ENCODE measurements at regions of chr21 and their contacts with region 1.

Region 1: DNA sequence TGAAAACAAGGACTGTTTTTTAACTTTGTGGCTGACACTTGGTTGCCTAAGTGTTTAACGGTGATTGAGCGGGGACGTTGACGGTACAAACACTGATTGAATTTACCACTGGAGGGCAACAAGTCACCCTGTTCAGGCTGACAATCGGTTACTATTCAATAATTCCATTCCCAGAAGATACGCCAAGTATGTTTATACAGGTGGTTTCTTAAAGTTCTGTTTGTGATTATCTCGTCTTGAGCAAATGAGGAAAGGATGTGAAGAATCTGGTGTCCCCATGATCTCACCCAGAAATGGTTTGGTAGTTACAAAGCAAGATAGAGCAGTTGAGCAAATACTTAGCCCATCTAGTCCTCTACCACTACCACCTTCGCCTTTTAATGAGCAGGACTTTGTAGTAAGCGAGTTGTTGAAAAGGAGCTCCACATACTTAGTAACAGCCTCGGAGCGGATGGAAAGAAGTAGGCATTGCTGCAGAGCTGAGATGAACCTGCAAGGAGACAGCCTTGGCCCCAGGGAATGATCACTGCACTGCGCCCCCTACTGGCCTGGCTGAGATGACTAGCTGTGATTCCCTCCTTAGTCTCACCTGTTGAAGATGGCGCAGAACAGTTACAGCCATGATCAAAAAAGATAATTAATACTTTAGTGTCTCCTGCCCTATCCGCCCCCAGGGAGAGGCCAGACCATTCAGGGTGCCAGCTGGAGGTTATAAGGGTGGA is 36.3 kb downstream of the IFNAR1 start:
- DNase-seq: peak; percentile 82 to 87 (median 83)
- H3K4me3 ChIP-seq: peak overlapping the region; percentile 47 to 58
- H3K4me3 Mint-ChIP-seq: peak overlapping the region; percentile 83 to 97 (median 91)
- H3K27ac ChIP-seq: peak overlapping the region; percentile 47
- H3K27ac Mint-ChIP-seq: peak overlapping the region; percentile 87 to 99 (median 94)
- H3K4me1 ChIP-seq: peaks cover 21% of the 10 kb centered on the region
- H3K4me1 Mint-ChIP-seq: peaks cover 13 to 22% (median 18%) of the 10 kb centered on the region in 4 donors
- H3K27me3 ChIP-seq: no peaks in the 10 kb centered on the region
- H3K27me3 Mint-ChIP-seq: peaks cover 0 to under 1% of the 10 kb centered on the region in 2 donors

Region 2: DNA sequence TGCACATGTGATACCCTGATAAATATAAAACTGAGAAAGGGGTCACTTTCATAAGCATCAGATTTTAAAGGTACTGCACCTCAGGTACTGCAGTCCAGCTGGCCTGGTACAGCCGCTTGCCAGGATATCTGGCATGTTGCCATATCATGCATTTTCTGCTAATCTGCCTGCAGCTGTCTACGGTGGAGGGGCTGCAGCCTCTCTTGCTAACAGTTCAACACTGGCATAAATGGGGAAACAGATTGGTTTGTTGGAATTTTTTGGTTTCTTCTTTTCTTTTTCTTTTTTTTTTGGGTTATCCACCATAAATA is 1153.7 kb before region 1 on chr21:
- CTCF ChIA-PET with region 1: no interaction called
- POLR2A ChIA-PET with region 1: no interaction called
- intact Hi-C with region 1: no loop called
- DNase-seq: no peak
- H3K4me3 ChIP-seq: no peak overlapping the region
- H3K4me3 Mint-ChIP-seq: no peak overlapping the region
- H3K27ac ChIP-seq: no peak overlapping the region
- H3K27ac Mint-ChIP-seq: no peak overlapping the region
- H3K4me1 ChIP-seq: no peaks in the 10 kb centered on the region
- H3K4me1 Mint-ChIP-seq: no peaks in the 10 kb centered on the region
- H3K27me3 ChIP-seq: no peaks in the 10 kb centered on the region
- H3K27me3 Mint-ChIP-seq: peaks cover 4 to 9% of the 10 kb centered on the region in 2 donors

Region 3: GRCh38 chr21:32747396-32747795 is 613.6 kb before region 1 on chr21:
- CTCF ChIA-PET with region 1: no interaction called
- POLR2A ChIA-PET with region 1: no interaction called
- intact Hi-C with region 1: no loop called
- DNase-seq: no peak
- H3K4me3 ChIP-seq: no peak overlapping the region
- H3K4me3 Mint-ChIP-seq: no peak overlapping the region
- H3K27ac ChIP-seq: no peak overlapping the region
- H3K27ac Mint-ChIP-seq: peak overlapping the region in 3 of 7 donors; percentile 42 to 71 (median 45)
- H3K4me1 ChIP-seq: no peaks in the 10 kb centered on the region
- H3K4me1 Mint-ChIP-seq: peaks cover 0 to 19% (median 11%) of the 10 kb centered on the region in 4 donors
- H3K27me3 ChIP-seq: no peaks in the 10 kb centered on the region
- H3K27me3 Mint-ChIP-seq: no peaks in the 10 kb centered on the region

Region 4: DNA sequence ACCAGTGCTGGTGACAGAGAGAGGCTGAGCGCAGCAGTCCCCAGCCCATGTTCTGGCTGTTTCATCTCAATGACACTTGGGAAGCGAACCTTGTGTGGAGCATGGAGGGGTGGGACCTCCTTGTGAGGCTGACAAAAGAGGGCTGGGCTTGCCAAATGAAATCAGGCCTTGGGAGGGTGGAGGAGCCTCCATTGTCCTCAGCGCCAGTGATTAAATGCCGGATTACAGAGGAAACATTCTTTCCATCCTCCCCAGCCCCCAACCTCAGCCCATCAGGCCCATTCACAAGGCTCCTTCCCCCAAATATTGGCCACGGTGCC is 526.2 kb before region 1 on chr21:
- CTCF ChIA-PET with region 1: interaction called, 11 read pairs
- POLR2A ChIA-PET with region 1: no interaction called
- intact Hi-C with region 1: no loop called
- DNase-seq: no peak
- H3K4me3 ChIP-seq: no peak overlapping the region
- H3K4me3 Mint-ChIP-seq: no peak overlapping the region
- H3K27ac ChIP-seq: no peak overlapping the region
- H3K27ac Mint-ChIP-seq: no peak overlapping the region
- H3K4me1 ChIP-seq: no peaks in the 10 kb centered on the region
- H3K4me1 Mint-ChIP-seq: no peaks in the 10 kb centered on the region
- H3K27me3 ChIP-seq: no peaks in the 10 kb centered on the region
- H3K27me3 Mint-ChIP-seq: peaks cover 2 to 3% of the 10 kb centered on the region in 2 donors

Region 5: DNA sequence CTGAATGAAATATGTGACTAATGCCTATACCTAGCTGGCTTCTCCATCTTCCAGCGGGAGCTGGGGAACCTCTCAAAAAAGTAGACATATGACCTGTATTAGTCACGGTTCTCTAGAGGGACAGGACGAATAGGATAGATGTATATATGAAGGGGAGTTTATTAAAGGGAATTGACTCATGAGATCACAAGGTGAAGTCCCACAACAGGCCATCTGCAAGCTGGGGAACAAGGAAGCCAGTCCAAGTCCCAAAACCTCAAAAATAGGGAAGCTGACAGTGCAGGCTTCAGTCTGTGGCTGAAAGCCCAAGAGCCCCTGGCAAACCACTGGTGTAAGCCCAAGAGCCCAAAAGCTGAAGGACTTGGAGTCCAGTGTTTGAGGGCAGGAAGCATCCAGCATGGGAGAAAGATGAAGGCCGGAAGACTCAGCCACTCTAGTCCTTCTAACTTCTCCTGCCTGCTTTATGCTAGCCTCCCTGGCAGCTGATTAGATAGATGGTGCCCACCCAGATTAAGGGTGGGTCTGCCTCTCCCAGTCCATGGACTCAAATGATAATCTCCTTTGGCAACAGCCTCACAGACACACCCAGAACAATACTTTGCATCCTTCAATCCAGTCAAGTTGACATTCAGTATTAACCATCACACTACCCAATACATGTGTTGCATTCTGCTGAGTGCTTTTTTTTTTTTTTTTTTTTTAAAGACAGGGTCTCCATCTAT is 271.5 kb before region 1 on chr21:
- CTCF ChIA-PET with region 1: no interaction called
- POLR2A ChIA-PET with region 1: no interaction called
- intact Hi-C with region 1: no loop called
- DNase-seq: no peak
- H3K4me3 ChIP-seq: no peak overlapping the region
- H3K4me3 Mint-ChIP-seq: no peak overlapping the region
- H3K27ac ChIP-seq: no peak overlapping the region
- H3K27ac Mint-ChIP-seq: no peak overlapping the region
- H3K4me1 ChIP-seq: no peaks in the 10 kb centered on the region
- H3K4me1 Mint-ChIP-seq: no peaks in the 10 kb centered on the region
- H3K27me3 ChIP-seq: no peaks in the 10 kb centered on the region
- H3K27me3 Mint-ChIP-seq: peaks cover 3 to 10% of the 10 kb centered on the region in 2 donors

Region 6: GRCh38 chr21:33229784-33230544 is 131.1 kb before region 1 on chr21 and contains the start of gene IFNAR2:
- CTCF ChIA-PET with region 1: interaction called, 9 read pairs
- POLR2A ChIA-PET with region 1: interaction called, 17 read pairs
- intact Hi-C with region 1: no loop called
- DNase-seq: peak; percentile 63 to 73 (median 66)
- H3K4me3 ChIP-seq: peak within 1 kb of the TSS; percentile 70 to 87
- H3K4me3 Mint-ChIP-seq: peak within 1 kb of the TSS; percentile 89 to 97 (median 94)
- H3K27ac ChIP-seq: peak within 1 kb of the TSS; percentile 86
- H3K27ac Mint-ChIP-seq: peak within 1 kb of the TSS; percentile 90 to 96 (median 94)
- H3K4me1 ChIP-seq: peaks cover 41% of the 10 kb centered on the region
- H3K4me1 Mint-ChIP-seq: peaks cover 32 to 49% (median 39%) of the 10 kb centered on the region in 4 donors
- H3K27me3 ChIP-seq: no peaks in the 10 kb centered on the region
- H3K27me3 Mint-ChIP-seq: no peaks in the 10 kb centered on the region
- total RNA-seq, gene IFNAR2: 76.5 to 77.7 TPM

Region 7: DNA sequence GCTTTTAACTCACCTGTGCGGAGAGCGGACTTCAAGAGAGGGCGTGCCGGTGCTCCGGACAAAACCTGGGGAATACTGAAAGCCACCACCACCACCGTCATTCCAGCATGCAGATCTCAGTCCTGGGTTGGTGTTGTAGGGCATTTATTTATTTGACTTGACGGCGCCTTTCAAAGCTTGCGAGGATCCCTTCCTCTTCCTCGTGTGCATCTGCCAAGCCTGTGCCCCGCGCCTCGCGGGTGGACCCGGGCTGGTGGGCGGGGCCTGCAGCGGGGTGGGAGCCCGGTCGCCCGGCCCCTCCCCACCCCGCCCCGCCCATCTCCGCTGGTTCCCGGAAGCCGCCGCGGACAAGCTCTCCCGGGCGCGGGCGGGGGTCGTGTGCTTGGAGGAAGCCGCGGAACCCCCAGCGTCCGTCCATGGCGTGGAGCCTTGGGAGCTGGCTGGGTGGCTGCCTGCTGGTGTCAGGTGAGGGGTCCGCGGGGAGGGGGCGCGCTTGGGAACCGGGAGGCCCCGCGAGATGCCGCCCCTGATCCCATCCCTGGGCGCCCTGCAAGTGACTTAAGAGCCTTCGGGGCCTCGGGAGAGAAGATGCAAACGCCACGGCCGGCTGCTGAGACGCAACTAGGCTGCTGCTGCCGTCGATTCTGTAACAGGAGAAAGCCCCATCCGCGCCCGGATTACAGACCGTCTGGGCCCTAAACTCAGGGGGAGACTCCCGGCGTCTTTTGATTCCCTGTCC is 94.8 kb before region 1 on chr21 and contains the start of gene IL10RB:
- CTCF ChIA-PET with region 1: interaction called, 20 read pairs
- POLR2A ChIA-PET with region 1: interaction called, 34 read pairs
- intact Hi-C with region 1: loop called (anchors 5 kb)
- DNase-seq: peak; percentile 61 to 77 (median 68)
- H3K4me3 ChIP-seq: peak within 1 kb of the TSS; percentile 54 to 79
- H3K4me3 Mint-ChIP-seq: peak within 1 kb of the TSS; percentile 93 to 99 (median 96)
- H3K27ac ChIP-seq: peak within 1 kb of the TSS; percentile 80
- H3K27ac Mint-ChIP-seq: peak within 1 kb of the TSS; percentile 92 to 97 (median 95)
- H3K4me1 ChIP-seq: peaks cover 59% of the 10 kb centered on the region
- H3K4me1 Mint-ChIP-seq: peaks cover 38 to 74% (median 50%) of the 10 kb centered on the region in 4 donors
- H3K27me3 ChIP-seq: no peaks in the 10 kb centered on the region
- H3K27me3 Mint-ChIP-seq: no peaks in the 10 kb centered on the region
- total RNA-seq, gene IL10RB: 30.6 to 36.4 TPM

Region 8: DNA sequence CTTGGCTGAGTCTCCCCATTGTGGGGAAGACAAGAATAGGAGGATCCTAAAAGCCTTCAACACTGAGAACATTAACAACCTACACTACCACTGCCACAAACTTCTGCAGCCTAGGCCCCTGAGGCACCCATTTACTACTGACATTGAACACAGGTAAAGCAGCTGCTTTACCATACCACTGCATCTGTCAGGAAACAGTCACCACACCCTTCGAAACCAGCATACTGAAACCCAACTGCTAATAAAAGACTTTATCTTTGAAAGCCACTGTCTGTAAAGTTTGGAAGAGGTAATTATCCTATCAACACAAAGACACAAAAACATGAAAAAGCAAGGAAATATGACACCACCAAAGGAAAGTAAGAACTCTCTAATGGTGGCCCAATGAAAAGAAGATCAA is 28.9 kb before region 1 on chr21:
- CTCF ChIA-PET with region 1: interaction called, 42 read pairs
- POLR2A ChIA-PET with region 1: interaction called, 114 read pairs
- intact Hi-C with region 1: no loop called
- DNase-seq: peak in 2 of 5 donors; percentile 14 to 25
- H3K4me3 ChIP-seq: no peak overlapping the region
- H3K4me3 Mint-ChIP-seq: peak overlapping the region; percentile 21 to 73 (median 37)
- H3K27ac ChIP-seq: peak overlapping the region; percentile 13
- H3K27ac Mint-ChIP-seq: peak overlapping the region; percentile 5 to 92 (median 77)
- H3K4me1 ChIP-seq: peaks cover 60% of the 10 kb centered on the region
- H3K4me1 Mint-ChIP-seq: peaks cover 41 to 70% (median 53%) of the 10 kb centered on the region in 4 donors
- H3K27me3 ChIP-seq: no peaks in the 10 kb centered on the region
- H3K27me3 Mint-ChIP-seq: no peaks in the 10 kb centered on the region

Region 9: GRCh38 chr21:33380483-33380998 is 19.5 kb after region 1 on chr21:
- CTCF ChIA-PET with region 1: interaction called, 59 read pairs
- POLR2A ChIA-PET with region 1: interaction called, 62 read pairs
- intact Hi-C with region 1: loop called (anchors 1 kb)
- DNase-seq: peak; percentile 68 to 93 (median 72)
- H3K4me3 ChIP-seq: no peak overlapping the region
- H3K4me3 Mint-ChIP-seq: peak overlapping the region in 7 of 8 donors; percentile 44 to 81 (median 66)
- H3K27ac ChIP-seq: peak overlapping the region; percentile 44
- H3K27ac Mint-ChIP-seq: peak overlapping the region; percentile 87 to 96 (median 91)
- H3K4me1 ChIP-seq: peaks cover 64% of the 10 kb centered on the region
- H3K4me1 Mint-ChIP-seq: peaks cover 45 to 74% (median 58%) of the 10 kb centered on the region in 4 donors
- H3K27me3 ChIP-seq: no peaks in the 10 kb centered on the region
- H3K27me3 Mint-ChIP-seq: no peaks in the 10 kb centered on the region

Region 10: DNA sequence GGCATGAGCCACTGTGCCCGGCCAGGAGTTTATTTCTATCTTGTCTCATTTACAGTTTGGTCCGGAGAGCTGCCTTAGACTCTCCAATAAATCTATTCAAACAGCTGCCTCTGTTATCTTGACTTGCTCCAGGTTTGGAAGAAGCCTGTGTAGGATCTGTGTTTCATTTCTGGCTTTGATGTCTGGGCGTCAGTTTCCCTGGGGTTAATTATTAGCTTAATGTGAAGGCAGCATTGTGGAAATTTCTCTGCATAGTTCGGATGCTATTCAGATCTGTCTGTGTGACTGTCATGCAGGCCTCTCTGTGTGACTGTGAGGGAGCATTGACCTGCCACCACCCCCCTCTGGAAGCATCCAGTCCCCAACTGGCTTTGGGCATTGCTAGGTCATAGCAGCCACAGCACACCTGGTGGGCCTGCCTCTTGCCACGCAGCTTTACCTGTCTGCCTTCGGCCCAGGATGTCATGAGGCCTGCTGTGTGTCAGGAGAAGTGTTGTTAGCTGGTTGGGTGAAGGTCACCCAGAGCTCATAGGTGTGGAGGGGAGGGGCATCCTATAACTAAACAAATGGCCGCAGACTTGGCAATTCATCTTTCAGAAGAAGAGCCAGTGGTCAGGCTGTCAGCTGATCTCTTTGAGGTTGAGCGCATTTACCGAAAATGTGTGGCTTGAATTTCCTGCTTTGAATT is 51.9 kb after region 1 on chr21:
- CTCF ChIA-PET with region 1: interaction called, 12 read pairs
- POLR2A ChIA-PET with region 1: interaction called, 3 read pairs
- intact Hi-C with region 1: no loop called
- DNase-seq: no peak
- H3K4me3 ChIP-seq: no peak overlapping the region
- H3K4me3 Mint-ChIP-seq: peak overlapping the region in 6 of 8 donors; percentile 15 to 58 (median 41)
- H3K27ac ChIP-seq: no peak overlapping the region
- H3K27ac Mint-ChIP-seq: peak overlapping the region; percentile 11 to 80 (median 42)
- H3K4me1 ChIP-seq: peaks cover 11% of the 10 kb centered on the region
- H3K4me1 Mint-ChIP-seq: peaks cover 18 to 48% (median 26%) of the 10 kb centered on the region in 4 donors
- H3K27me3 ChIP-seq: no peaks in the 10 kb centered on the region
- H3K27me3 Mint-ChIP-seq: no peaks in the 10 kb centered on the region